Heart left ventricle (tissue), 16 donors: ENCODE measurements at regions of chr15 and their contacts with region 1.

Region 1: DNA sequence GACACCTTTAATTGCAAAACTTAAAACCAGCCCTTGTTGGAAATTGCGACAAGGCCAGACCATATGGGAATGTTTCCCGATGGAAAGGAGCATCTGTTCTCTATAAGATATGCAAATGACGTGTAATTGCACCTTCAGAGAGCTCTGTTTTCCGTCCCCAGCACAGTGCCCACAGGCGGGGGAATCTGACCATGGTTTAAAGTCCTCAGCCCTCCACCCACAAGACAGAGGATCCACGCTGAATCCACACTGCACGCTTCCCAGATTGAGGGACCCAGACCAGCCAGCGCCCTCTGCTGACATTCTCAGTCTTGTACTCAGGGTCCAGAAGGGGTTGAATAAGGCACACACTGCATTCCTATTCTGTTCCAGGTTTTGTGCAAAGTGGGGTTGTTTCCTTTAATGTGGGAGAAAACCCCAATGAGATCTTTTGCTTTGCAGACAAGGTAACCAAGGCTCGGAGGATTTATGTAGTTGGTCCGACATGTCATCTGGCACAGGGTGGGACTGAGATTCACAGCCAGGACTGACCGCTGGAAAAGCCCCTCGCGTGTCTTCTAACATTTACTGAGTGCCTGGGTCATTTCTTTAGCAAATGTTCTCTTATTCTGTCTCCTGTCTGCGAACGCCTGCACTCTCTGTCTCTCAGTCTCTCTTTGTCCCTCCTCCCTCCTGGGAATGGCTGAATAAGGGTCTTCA is 36.8 kb upstream of the KLHL25 start:
- DNase-seq: peak in 4 of 5 donors; percentile 60 to 71 (median 65)
- ATAC-seq: peak; percentile 55 to 92 (median 85)
- H3K4me3 ChIP-seq: no peak overlapping the region
- H3K27ac ChIP-seq: no peak overlapping the region
- H3K4me1 ChIP-seq: peaks cover 0 to 4% (median 0%) of the 10 kb centered on the region in 12 donors
- H3K27me3 ChIP-seq: no peaks in the 10 kb centered on the region
- CTCF ChIP-seq: peak; percentile 45 to 74 (median 64)
- POLR2A ChIP-seq: no peak

Region 2: GRCh38 chr15:85306946-85307708 is 524.4 kb before region 1 on chr15:
- intact Hi-C with region 1: loop called in 2 of 10 experiments (anchors 10 kb)
- DNase-seq: no peak
- ATAC-seq: no peak
- H3K4me3 ChIP-seq: no peak overlapping the region
- H3K27ac ChIP-seq: no peak overlapping the region
- H3K4me1 ChIP-seq: peaks cover 0 to under 1% (median 0%) of the 10 kb centered on the region in 12 donors
- H3K27me3 ChIP-seq: no peaks in the 10 kb centered on the region
- CTCF ChIP-seq: no peak
- POLR2A ChIP-seq: no peak

Region 3: GRCh38 chr15:85504749-85505676 is 326.6 kb before region 1 on chr15:
- intact Hi-C with region 1: loop called in 1 of 10 experiments (anchors 10 kb)
- DNase-seq: peak in 2 of 5 donors; percentile 39 to 62
- ATAC-seq: peak in 3 of 4 donors; percentile 50 to 66 (median 58)
- H3K4me3 ChIP-seq: no peak overlapping the region
- H3K27ac ChIP-seq: peak overlapping the region in 10 of 12 donors; percentile 29 to 83 (median 64)
- H3K4me1 ChIP-seq: peaks cover 2 to 91% (median 48%) of the 10 kb centered on the region in 12 donors
- H3K27me3 ChIP-seq: no peaks in the 10 kb centered on the region
- CTCF ChIP-seq: peak; percentile 29 to 79 (median 62)
- POLR2A ChIP-seq: no peak

Region 4: DNA sequence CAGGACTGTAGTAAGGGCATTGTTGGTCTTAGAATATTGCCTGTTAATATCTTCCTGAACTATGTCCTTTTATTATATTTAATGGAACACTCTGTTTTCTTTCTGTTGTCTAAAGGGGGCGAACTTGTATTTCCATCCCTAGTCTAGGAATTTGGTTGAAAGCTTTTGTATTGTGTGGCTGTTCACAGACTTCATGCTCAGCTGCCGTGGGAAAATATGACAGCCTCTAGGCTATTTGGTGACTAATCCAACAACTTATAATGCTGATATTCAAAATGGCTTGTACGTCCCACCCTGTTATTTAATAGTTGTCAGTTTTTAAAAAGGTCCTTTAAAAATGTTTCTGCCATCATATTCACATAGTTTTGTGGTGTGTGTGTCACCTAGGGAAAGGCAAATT is 239.4 kb before region 1 on chr15:
- intact Hi-C with region 1: loop called in 3 of 10 experiments (anchors 10 kb)
- DNase-seq: no peak
- ATAC-seq: peak in 3 of 4 donors; percentile 62 to 75 (median 69)
- H3K4me3 ChIP-seq: no peak overlapping the region
- H3K27ac ChIP-seq: peak overlapping the region in 11 of 12 donors; percentile 16 to 69 (median 55)
- H3K4me1 ChIP-seq: peaks cover 5 to 89% (median 65%) of the 10 kb centered on the region in 12 donors
- H3K27me3 ChIP-seq: no peaks in the 10 kb centered on the region
- CTCF ChIP-seq: peak in 9 of 12 donors; percentile 17 to 58 (median 40)
- POLR2A ChIP-seq: no peak

Region 5: GRCh38 chr15:85730001-85730820 is 101.4 kb before region 1 on chr15:
- intact Hi-C with region 1: loop called (anchors 1 to 5 kb)
- DNase-seq: peak in 2 of 5 donors; percentile 34 to 45
- ATAC-seq: peak; percentile 18 to 64 (median 57)
- H3K4me3 ChIP-seq: no peak overlapping the region
- H3K27ac ChIP-seq: peak overlapping the region in 5 of 12 donors; percentile 4 to 82 (median 65)
- H3K4me1 ChIP-seq: peaks cover 0 to 41% (median 18%) of the 10 kb centered on the region in 12 donors
- H3K27me3 ChIP-seq: no peaks in the 10 kb centered on the region
- CTCF ChIP-seq: peak; percentile 60 to 83 (median 76)
- POLR2A ChIP-seq: no peak

Region 6: GRCh38 chr15:85761635-85762034 is 69.9 kb before region 1 on chr15:
- intact Hi-C with region 1: loop called in 2 of 10 experiments (anchors 2 to 5 kb)
- DNase-seq: no peak
- ATAC-seq: no peak
- H3K4me3 ChIP-seq: no peak overlapping the region
- H3K27ac ChIP-seq: no peak overlapping the region
- H3K4me1 ChIP-seq: peaks cover 8 to 72% (median 40%) of the 10 kb centered on the region in 12 donors
- H3K27me3 ChIP-seq: no peaks in the 10 kb centered on the region
- CTCF ChIP-seq: no peak
- POLR2A ChIP-seq: no peak

Region 7: GRCh38 chr15:85988741-85989140 is 157.2 kb after region 1 on chr15:
- intact Hi-C with region 1: no loop called
- DNase-seq: no peak
- ATAC-seq: no peak
- H3K4me3 ChIP-seq: no peak overlapping the region
- H3K27ac ChIP-seq: no peak overlapping the region
- H3K4me1 ChIP-seq: no peaks in the 10 kb centered on the region
- H3K27me3 ChIP-seq: no peaks in the 10 kb centered on the region
- CTCF ChIP-seq: no peak
- POLR2A ChIP-seq: no peak